Caco-2 (cell line): ENCODE measurements at regions of chr17 and their contacts with region 1.

Region 1: GRCh38 chr17:21098934-21099689 is 27.7 kb upstream of the DHRS7B start:
- DNase-seq: peak; percentile 90 to 92
- H3K4me3 ChIP-seq: peak overlapping the region; percentile 59
- H3K4me3 Mint-ChIP-seq: peak overlapping the region; percentile 92
- H3K27ac Mint-ChIP-seq: peak overlapping the region; percentile 99
- H3K4me1 ChIP-seq: peaks cover 7% of the 10 kb centered on the region
- H3K4me1 Mint-ChIP-seq: peaks cover 10% of the 10 kb centered on the region
- H3K27me3 ChIP-seq: no peaks in the 10 kb centered on the region
- H3K27me3 Mint-ChIP-seq: no peaks in the 10 kb centered on the region
- CTCF ChIP-seq: no peak

Region 2: GRCh38 chr17:20908373-20909273 is 190.5 kb before region 1 on chr17:
- CTCF ChIA-PET with region 1: interaction called, 4 read pairs
- POLR2A ChIA-PET with region 1: no interaction called
- intact Hi-C with region 1: loop called (anchors 5 kb)
- DNase-seq: peak; percentile 96 to 97
- H3K4me3 ChIP-seq: peak overlapping the region; percentile 32
- H3K4me3 Mint-ChIP-seq: peak overlapping the region; percentile 73
- H3K27ac Mint-ChIP-seq: peak overlapping the region; percentile 76
- H3K4me1 ChIP-seq: peaks cover 12% of the 10 kb centered on the region; the same call in 1 of the 2 replicates
- H3K4me1 Mint-ChIP-seq: peaks cover 12% of the 10 kb centered on the region
- H3K27me3 ChIP-seq: no peaks in the 10 kb centered on the region
- H3K27me3 Mint-ChIP-seq: peaks cover 6% of the 10 kb centered on the region
- CTCF ChIP-seq: peak; percentile 42 to 86

Region 3: GRCh38 chr17:21043286-21044232 is 55.6 kb before region 1 on chr17:
- CTCF ChIA-PET with region 1: interaction called, 37 read pairs
- POLR2A ChIA-PET with region 1: interaction called, 39 read pairs
- intact Hi-C with region 1: loop called (anchors 1 kb)
- DNase-seq: peak; percentile 99
- H3K4me3 ChIP-seq: peak overlapping the region; percentile 87
- H3K4me3 Mint-ChIP-seq: peak overlapping the region; percentile 80
- H3K27ac Mint-ChIP-seq: peak overlapping the region; percentile 71
- H3K4me1 ChIP-seq: no peaks in the 10 kb centered on the region
- H3K4me1 Mint-ChIP-seq: peaks cover 9% of the 10 kb centered on the region
- H3K27me3 ChIP-seq: no peaks in the 10 kb centered on the region
- H3K27me3 Mint-ChIP-seq: no peaks in the 10 kb centered on the region
- CTCF ChIP-seq: peak; percentile 86 to 89

Region 4: DNA sequence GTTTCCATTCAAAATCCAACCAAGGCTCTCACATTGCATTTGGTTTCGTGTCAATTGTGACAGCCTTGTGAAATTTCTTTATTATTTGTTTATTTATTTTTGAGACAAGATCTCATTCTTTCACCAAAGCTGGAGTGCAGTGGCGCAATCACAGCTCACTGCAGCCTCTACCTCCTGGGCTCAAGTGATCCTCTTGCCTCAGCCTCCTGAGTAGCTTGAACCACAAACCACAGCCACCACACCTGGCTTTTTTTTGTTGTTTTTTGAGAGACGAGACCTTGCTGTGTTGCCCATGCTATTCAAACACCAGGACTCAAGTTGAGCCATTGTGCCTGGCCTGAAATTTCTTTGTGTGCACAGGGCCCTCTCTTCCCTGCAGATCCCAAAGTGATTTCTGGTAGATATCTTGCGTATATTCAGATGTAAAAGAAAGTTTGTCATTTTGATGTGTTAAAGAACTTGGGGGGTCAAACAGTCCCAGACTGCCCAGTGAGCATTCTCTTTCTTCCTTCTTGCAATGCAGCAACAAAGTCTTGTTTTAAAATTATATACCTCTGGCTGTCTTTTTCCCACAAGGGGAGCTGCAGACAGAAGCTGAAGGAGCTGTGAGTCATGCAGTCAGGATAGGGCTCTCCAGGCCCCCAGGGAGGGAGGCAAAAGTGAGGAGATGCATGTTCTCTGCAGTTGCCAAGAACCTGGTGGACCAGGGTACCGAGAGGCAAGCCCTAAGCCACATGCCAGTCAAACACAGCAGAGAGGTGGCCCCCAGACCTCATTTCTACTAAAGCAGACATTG is 40.8 kb before region 1 on chr17:
- CTCF ChIA-PET with region 1: interaction called, 19 read pairs
- POLR2A ChIA-PET with region 1: no interaction called
- intact Hi-C with region 1: no loop called
- DNase-seq: peak in 1 of 2 experiments; percentile 24
- H3K4me3 ChIP-seq: no peak overlapping the region
- H3K4me3 Mint-ChIP-seq: no peak overlapping the region
- H3K27ac Mint-ChIP-seq: no peak overlapping the region
- H3K4me1 ChIP-seq: no peaks in the 10 kb centered on the region
- H3K4me1 Mint-ChIP-seq: no peaks in the 10 kb centered on the region
- H3K27me3 ChIP-seq: no peaks in the 10 kb centered on the region
- H3K27me3 Mint-ChIP-seq: no peaks in the 10 kb centered on the region
- CTCF ChIP-seq: peak in 1 of 2 experiments; percentile 3

Region 5: DNA sequence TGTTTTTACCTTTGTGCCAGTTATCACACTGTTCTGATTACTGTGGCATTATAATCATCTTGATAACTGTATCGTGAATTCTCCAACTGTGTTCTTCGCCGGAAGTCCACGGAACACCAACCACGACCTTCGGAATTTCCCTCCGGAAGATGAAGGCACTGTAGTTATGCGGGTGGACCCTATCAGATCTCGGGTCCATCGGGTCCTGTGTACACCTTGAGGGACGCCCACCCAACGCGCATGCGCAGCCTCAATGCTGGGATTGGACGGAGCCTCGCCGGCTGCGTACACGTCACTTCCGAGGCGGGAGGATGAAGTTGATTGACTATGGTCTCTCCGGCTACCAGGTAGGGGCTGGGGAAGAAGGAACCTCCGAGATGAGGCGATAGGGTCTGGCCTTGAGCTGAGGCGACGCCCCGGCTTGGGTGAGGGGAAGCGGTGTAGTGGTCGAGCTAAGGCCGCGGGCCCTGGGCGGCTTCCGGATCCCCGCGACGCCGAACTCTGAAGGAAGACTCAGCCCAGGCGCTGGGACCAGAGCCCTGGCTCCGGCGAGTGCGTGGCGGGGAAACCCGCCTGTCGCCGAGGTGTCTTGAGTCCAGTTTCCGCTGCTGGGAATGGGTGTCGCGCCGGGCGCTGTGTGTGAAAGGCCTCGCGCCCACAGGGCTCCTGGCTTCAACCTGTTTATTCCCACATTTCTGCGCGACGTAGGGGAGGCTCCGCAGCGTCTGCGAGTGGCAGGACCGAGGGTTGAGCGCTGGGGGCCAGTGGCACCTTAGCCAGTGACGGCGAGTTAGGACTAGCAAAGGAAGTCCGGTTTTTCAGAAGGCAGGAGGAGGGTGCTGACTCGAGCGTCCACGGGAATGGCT is 27.8 kb after region 1 on chr17 and contains the start of gene DHRS7B:
- CTCF ChIA-PET with region 1: no interaction called
- POLR2A ChIA-PET with region 1: no interaction called
- intact Hi-C with region 1: loop called (anchors 2 kb)
- DNase-seq: peak; percentile 98 to 99
- H3K4me3 ChIP-seq: peak within 1 kb of the TSS; percentile 82
- H3K4me3 Mint-ChIP-seq: peak within 1 kb of the TSS; percentile 83
- H3K27ac Mint-ChIP-seq: peak within 1 kb of the TSS; percentile 84
- H3K4me1 ChIP-seq: no peaks in the 10 kb centered on the region
- H3K4me1 Mint-ChIP-seq: peaks cover 18% of the 10 kb centered on the region
- H3K27me3 ChIP-seq: no peaks in the 10 kb centered on the region
- H3K27me3 Mint-ChIP-seq: no peaks in the 10 kb centered on the region
- CTCF ChIP-seq: no peak
- total RNA-seq, gene DHRS7B: 22.8 and 30.0 TPM in 2 replicates